ENCODE measurements at regions of chr18 and their contacts with region 1.

Region 1: GRCh38 chr18:20960735-20961134 is 150.9 kb downstream of the ROCK1 start:
- DNase-seq: no peak
- ATAC-seq: no peak
- H3K4me3 ChIP-seq: no peak overlapping the region
- H3K27ac ChIP-seq: no peak overlapping the region
- H3K4me1 ChIP-seq: no peaks in the 10 kb centered on the region
- H3K27me3 ChIP-seq: no peaks in the 10 kb centered on the region
- CTCF ChIP-seq: no peak
- EP300 ChIP-seq: no peak
- POLR2A ChIP-seq: no peak
- RAD21 ChIP-seq: no peak

Region 2: DNA sequence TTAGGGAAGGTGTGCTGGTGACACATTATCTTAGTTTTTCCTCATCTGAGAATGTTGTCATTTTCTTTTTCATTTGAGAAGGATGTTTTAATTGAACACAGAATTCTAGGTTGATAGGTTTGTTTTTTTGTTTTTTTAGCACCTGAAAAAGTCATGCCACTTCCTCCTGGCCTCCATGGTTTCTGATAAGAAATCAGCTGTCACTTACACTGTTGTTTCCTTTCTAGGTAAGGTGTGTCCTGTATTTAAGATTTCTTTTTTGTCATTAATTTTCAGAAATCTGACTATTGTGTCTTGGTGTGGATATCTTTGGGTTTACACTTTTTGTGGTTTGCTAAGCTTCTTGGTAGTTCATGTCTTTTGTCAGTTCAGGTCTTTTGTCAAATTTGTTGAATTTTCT is 51.6 kb after region 1 on chr18:
- CTCF ChIA-PET with region 1: no interaction called
- POLR2A ChIA-PET with region 1: no interaction called
- RAD21 ChIA-PET with region 1: no interaction called
- SMC1A ChIA-PET with region 1: no interaction called
- in situ Hi-C with region 1: no loop called
- intact Hi-C with region 1: loop called (anchors 5 kb)
- DNase-seq: no peak
- ATAC-seq: no peak
- H3K4me3 ChIP-seq: no peak overlapping the region
- H3K27ac ChIP-seq: no peak overlapping the region
- H3K4me1 ChIP-seq: no peaks in the 10 kb centered on the region
- H3K27me3 ChIP-seq: no peaks in the 10 kb centered on the region
- CTCF ChIP-seq: no peak
- EP300 ChIP-seq: no peak
- POLR2A ChIP-seq: no peak
- RAD21 ChIP-seq: no peak

Measured in GM12878 (cell line).